Ovary (tissue), 10 donors: ENCODE measurements at regions of chr12 and their contacts with region 1.

Region 1: GRCh38 chr12:123271001-123271729 is 491 bp downstream of the CDK2AP1 start:
- DNase-seq: peak; percentile 67 to 84 (median 77)
- H3K4me3 ChIP-seq: peak overlapping the region; percentile 69
- H3K27ac ChIP-seq: peak overlapping the region; percentile 79 to 81
- H3K4me1 ChIP-seq: peaks cover 9% of the 10 kb centered on the region
- H3K27me3 ChIP-seq: no peaks in the 10 kb centered on the region
- CTCF ChIP-seq: peak in 2 of 3 donors; percentile 47 to 48
- EP300 ChIP-seq: no peak
- POLR2A ChIP-seq: no peak

Region 2: GRCh38 chr12:123354600-123354999 is 83.4 kb after region 1 on chr12:
- intact Hi-C with region 1: loop called in 1 of 4 experiments (anchors 10 kb)
- DNase-seq: no peak
- H3K4me3 ChIP-seq: no peak overlapping the region
- H3K27ac ChIP-seq: no peak overlapping the region
- H3K4me1 ChIP-seq: peaks cover 10% of the 10 kb centered on the region
- H3K27me3 ChIP-seq: no peaks in the 10 kb centered on the region
- CTCF ChIP-seq: no peak
- EP300 ChIP-seq: no peak
- POLR2A ChIP-seq: no peak

Region 3: DNA sequence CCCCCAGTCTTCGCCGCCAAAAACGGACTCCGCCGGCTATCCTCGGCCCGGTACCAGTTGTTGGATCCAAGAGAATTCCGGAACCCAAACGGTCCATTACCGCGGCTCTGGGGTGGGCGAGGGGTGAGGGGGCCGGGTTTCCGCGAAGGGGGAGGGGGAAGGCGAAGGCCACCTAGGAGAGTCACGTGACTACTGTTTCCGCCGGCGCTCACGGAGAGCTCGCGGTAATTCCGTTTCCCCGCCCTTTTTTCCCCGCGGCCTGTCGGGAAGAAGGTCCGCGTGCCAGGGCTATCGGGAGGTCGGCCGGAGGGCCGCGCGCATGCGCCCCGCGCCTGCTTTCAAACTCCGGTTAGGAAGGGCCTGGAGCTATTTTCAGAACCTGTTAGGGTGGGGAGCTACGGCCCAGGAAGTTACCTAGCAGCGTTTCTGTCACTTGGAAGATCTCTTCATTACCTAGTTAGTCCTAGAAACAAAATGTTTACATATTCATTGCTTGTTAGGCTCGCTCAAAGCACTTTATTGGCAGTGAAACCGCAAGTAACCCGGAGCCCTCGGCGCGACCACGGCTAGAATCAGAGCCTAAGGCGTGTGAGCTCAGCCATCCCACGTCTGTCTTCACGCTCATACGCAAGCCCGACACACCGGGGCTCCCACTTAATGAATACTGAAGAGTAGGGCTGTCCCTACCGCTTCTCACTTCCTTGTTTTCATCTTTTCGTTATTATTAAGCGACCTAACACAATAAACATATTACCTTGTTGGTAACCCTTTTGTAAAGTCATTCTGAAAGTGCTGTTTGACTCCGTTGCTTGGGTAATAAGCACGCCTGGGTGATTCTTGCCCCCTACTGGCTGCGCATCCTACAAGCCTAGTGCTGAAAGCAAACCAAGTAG is 94.1 kb after region 1 on chr12:
- intact Hi-C with region 1: loop called in 1 of 4 experiments (anchors 2 kb)
- DNase-seq: peak; percentile 98 to 99 (median 98)
- H3K4me3 ChIP-seq: peak overlapping the region; percentile 67
- H3K27ac ChIP-seq: peak overlapping the region; percentile 83 to 93
- H3K4me1 ChIP-seq: peaks cover 6% of the 10 kb centered on the region
- H3K27me3 ChIP-seq: no peaks in the 10 kb centered on the region
- CTCF ChIP-seq: peak in 2 of 3 donors; percentile 80 to 83
- EP300 ChIP-seq: peak; percentile 50
- POLR2A ChIP-seq: peak; percentile 55

Region 4: GRCh38 chr12:123601602-123602489 is 330.7 kb after region 1 on chr12 and contains the start of gene DDX55:
- intact Hi-C with region 1: loop called in 1 of 4 experiments (anchors 10 kb)
- DNase-seq: peak; percentile 71 to 85 (median 76)
- H3K4me3 ChIP-seq: peak within 1 kb of the TSS; percentile 94
- H3K27ac ChIP-seq: peak within 1 kb of the TSS; percentile 71
- H3K4me1 ChIP-seq: peaks cover 3% of the 10 kb centered on the region
- H3K27me3 ChIP-seq: no peaks in the 10 kb centered on the region
- CTCF ChIP-seq: peak; percentile 22 to 85 (median 40)
- EP300 ChIP-seq: no peak
- POLR2A ChIP-seq: peak; percentile 62
- total RNA-seq, gene DDX55: 12.0 to 26.6 (median 19.1) TPM